ENCODE measurements at regions of chr2 and their contacts with region 1.

Region 1: DNA sequence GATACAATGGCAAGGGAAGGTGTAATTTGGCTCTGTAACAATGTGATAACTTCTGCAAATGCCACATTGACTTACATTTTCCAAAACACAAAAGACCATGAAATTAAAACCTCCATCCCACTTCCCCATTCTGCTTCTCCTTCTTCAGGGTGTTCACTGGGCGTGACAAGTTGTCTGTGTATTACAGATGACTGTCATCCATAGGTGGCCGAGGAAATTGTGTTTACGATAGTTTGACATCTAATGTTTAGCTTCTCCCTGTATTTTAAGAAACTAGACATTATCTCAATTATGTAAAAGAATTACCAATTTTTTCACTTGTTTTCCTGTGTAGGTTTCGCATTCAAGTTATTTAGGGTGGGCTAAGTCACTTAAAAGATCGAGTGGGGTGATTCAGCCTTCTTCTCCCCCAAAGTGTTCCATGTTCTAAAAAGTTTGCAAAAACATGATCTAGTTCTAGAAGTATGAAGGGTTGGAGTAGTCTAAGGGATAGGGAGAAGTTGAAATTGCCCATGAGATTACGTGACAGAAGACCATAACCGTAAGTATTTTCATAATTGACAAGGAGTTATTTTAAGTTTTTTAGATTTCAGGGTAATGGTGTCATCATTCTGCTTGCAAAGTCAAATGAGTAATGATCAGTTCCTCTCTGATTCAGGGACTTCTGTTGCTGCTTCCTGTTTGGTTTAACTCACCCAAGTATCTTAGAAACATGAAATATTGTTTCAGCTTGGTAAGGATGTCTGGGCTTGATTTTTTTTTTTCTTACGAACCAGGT is 25.2 kb upstream of the CYTIP start:
- DNase-seq: peak; percentile 27
- H3K4me3 Mint-ChIP-seq: peak overlapping the region; percentile 64
- H3K27ac Mint-ChIP-seq: peak overlapping the region; percentile 99
- H3K4me1 Mint-ChIP-seq: peaks cover 94% of the 10 kb centered on the region
- H3K27me3 Mint-ChIP-seq: no peaks in the 10 kb centered on the region

Region 2: DNA sequence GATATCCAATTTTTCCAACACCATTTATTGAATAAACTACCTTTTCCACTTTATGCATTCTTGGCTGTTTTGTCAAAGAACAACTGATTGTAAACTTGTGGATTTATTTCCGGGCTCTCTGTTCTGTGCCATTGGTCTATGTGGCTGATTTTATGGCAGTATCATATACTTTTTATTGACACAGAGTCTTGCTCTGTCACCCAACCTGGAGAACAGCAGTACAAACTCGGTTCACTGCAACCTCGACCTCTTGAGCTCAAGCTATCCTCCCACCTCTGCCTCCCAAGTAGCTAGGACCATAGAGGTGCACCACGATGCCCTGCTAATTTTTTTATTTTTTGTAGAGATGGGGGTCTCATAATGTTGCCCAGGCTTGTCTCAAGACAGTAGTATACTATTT is 218.3 kb before region 1 on chr2:
- CTCF ChIA-PET with region 1: no interaction called
- intact Hi-C with region 1: no loop called
- DNase-seq: no peak
- H3K4me3 Mint-ChIP-seq: no peak overlapping the region
- H3K27ac Mint-ChIP-seq: no peak overlapping the region
- H3K4me1 Mint-ChIP-seq: peaks cover 15% of the 10 kb centered on the region
- H3K27me3 Mint-ChIP-seq: peaks cover 10% of the 10 kb centered on the region

Region 3: GRCh38 chr2:157261199-157261783 is 207.8 kb before region 1 on chr2:
- CTCF ChIA-PET with region 1: no interaction called
- intact Hi-C with region 1: loop called (anchors 5 kb)
- DNase-seq: peak; percentile 83
- H3K4me3 Mint-ChIP-seq: no peak overlapping the region
- H3K27ac Mint-ChIP-seq: peak overlapping the region; percentile 2
- H3K4me1 Mint-ChIP-seq: peaks cover 25% of the 10 kb centered on the region
- H3K27me3 Mint-ChIP-seq: peaks cover 11% of the 10 kb centered on the region

Region 4: GRCh38 chr2:157336137-157337010 is 132.7 kb before region 1 on chr2:
- CTCF ChIA-PET with region 1: interaction called, 3 read pairs
- intact Hi-C with region 1: loop called (anchors 1 kb)
- DNase-seq: peak; percentile 68
- H3K4me3 Mint-ChIP-seq: peak overlapping the region; percentile 40
- H3K27ac Mint-ChIP-seq: no peak overlapping the region
- H3K4me1 Mint-ChIP-seq: peaks cover 78% of the 10 kb centered on the region
- H3K27me3 Mint-ChIP-seq: no peaks in the 10 kb centered on the region

Region 5: DNA sequence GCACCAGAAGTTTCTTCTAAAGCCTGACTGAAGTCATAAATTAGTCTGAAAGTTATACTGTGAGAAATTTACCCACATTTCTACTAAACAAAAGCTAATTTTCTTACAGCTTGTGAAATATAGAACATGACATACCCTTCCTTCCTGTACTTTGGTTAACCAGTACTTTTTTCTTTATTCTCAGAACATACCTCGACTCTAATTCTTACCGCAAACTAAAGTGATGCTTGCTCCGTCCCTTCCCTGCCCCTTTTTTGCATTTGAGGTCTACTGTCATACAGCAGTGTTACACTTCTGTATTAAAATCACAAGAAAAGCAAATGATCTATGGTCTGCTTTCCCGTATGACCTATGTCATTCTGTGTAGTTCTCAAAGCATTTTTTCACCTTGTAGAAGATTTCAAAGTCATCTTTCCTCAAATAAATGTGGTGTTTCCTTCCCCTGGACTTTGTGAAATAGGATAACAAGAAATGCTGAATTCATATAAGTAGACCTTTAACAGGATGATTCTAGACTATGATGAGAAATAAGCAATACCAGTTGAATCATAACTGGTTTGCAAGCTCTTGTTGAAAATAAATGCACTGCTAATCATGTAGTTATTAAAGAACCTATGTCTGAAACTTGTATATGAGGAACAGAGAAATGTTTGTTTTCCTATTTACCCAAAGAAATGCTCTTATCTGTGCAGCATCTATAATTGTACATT is 55.6 kb before region 1 on chr2:
- CTCF ChIA-PET with region 1: no interaction called
- intact Hi-C with region 1: loop called (anchors 1 kb)
- DNase-seq: peak; percentile 78
- H3K4me3 Mint-ChIP-seq: peak overlapping the region; percentile 64
- H3K27ac Mint-ChIP-seq: peak overlapping the region; percentile 99
- H3K4me1 Mint-ChIP-seq: peaks cover 90% of the 10 kb centered on the region
- H3K27me3 Mint-ChIP-seq: no peaks in the 10 kb centered on the region

Region 6: DNA sequence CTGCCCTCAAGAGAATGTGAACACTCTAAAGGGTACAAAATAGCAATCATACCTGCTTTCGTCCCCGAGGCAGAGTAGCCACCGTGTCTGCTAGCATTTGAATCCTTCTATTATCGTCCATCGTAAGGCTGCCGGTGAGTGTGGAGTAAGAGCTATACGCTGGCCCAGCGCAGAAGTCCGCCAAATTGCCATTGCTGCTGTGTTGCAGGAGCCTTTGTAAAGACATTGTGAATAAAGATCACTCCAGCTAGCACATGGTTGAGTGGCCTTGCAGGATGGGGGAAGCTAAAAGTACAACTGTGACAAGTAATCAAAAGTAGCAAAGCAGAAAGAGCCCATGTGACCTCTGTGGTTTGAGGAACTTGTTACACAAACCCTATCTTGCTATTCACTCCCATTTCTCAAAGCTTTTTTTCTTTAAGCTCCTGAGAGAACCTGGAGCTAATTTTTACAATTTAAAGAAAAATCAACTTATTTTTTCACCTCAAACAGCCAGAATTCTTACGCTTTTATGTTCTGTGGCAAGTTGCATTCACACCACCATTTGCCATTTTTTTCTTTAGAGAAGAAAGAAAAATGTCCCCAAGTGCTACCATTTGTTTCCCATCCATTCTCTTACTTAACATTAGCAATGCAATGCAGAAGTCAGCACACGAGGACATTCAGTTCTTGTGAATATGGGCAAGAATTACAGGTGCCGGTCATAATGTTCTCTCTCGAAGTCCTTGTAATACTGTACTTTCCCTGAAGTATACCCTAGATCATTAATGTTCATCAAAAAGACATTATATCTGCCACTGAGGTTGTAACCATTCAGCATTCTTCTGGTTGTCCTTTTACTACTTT is 25.1 kb before region 1 on chr2 and contains the start of gene CYTIP:
- CTCF ChIA-PET with region 1: interaction called, 9 read pairs
- intact Hi-C with region 1: loop called (anchors 1 kb)
- DNase-seq: peak; percentile 84
- H3K4me3 Mint-ChIP-seq: peak within 1 kb of the TSS; percentile 97
- H3K27ac Mint-ChIP-seq: peak within 1 kb of the TSS; percentile 100
- H3K4me1 Mint-ChIP-seq: peaks cover 40% of the 10 kb centered on the region
- H3K27me3 Mint-ChIP-seq: no peaks in the 10 kb centered on the region
- total RNA-seq, gene CYTIP: 599 to 610 TPM

Region 7: GRCh38 chr2:157492189-157492773 is 23.2 kb after region 1 on chr2:
- CTCF ChIA-PET with region 1: interaction called, 10 read pairs
- intact Hi-C with region 1: loop called (anchors 1 kb)
- DNase-seq: peak; percentile 89
- H3K4me3 Mint-ChIP-seq: no peak overlapping the region
- H3K27ac Mint-ChIP-seq: no peak overlapping the region
- H3K4me1 Mint-ChIP-seq: peaks cover 62% of the 10 kb centered on the region
- H3K27me3 Mint-ChIP-seq: no peaks in the 10 kb centered on the region

Region 8: GRCh38 chr2:157504623-157505022 is 35.5 kb after region 1 on chr2:
- CTCF ChIA-PET with region 1: no interaction called
- intact Hi-C with region 1: no loop called
- DNase-seq: no peak
- H3K4me3 Mint-ChIP-seq: no peak overlapping the region
- H3K27ac Mint-ChIP-seq: no peak overlapping the region
- H3K4me1 Mint-ChIP-seq: peaks cover 13% of the 10 kb centered on the region
- H3K27me3 Mint-ChIP-seq: peaks cover 3% of the 10 kb centered on the region

Region 9: GRCh38 chr2:157880927-157881326 is 411.8 kb after region 1 on chr2:
- CTCF ChIA-PET with region 1: no interaction called
- intact Hi-C with region 1: no loop called
- DNase-seq: no peak
- H3K4me3 Mint-ChIP-seq: no peak overlapping the region
- H3K27ac Mint-ChIP-seq: no peak overlapping the region
- H3K4me1 Mint-ChIP-seq: peaks cover 14% of the 10 kb centered on the region
- H3K27me3 Mint-ChIP-seq: no peaks in the 10 kb centered on the region

Measured in activated naive CD4-positive, alpha-beta T cell treated with anti-CD3 and anti-CD28 coated beads for 36 hours (primary cell).